ENCODE measurements at regions of chr1 and their contacts with region 1.

Region 1: DNA sequence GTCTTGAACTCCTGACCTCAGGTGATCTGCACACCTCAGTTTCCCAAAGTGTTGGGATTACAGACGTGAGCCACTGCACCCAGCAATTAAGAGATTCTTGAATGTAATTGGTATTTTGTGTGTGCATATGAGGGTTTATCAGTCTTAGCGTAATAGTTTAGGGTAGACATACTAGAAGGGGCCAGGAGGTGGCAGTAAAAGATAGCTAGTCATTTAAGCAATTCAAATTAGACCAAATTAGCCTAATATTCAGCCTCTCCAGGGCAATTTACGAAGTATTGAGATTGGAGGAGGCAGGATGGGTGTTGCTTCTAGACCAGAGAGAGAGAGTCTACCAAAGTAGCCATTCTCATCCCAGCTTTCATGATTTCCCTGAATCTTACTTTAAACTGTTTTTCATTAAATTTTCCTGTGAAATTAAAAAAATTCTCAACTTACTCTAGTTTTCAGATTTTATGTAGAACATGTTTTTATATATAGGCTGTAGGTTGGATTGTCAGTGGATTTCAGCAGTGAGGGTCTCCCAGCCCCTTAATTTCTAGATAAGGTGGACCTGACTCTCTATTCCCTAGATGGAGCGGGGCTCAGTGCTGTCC is 119.7 kb downstream of the HHAT start:
- DNase-seq: peak; percentile 28
- H3K4me3 Mint-ChIP-seq: no peak overlapping the region
- H3K27ac Mint-ChIP-seq: no peak overlapping the region
- H3K4me1 Mint-ChIP-seq: peaks cover 18% of the 10 kb centered on the region
- H3K27me3 Mint-ChIP-seq: peaks cover 9% of the 10 kb centered on the region

Region 2: GRCh38 chr1:210373885-210374599 is 74.4 kb before region 1 on chr1:
- CTCF ChIA-PET with region 1: interaction called, 11 read pairs
- DNase-seq: peak; percentile 73
- H3K4me3 Mint-ChIP-seq: no peak overlapping the region
- H3K27ac Mint-ChIP-seq: peak overlapping the region; percentile 50
- H3K4me1 Mint-ChIP-seq: peaks cover 9% of the 10 kb centered on the region
- H3K27me3 Mint-ChIP-seq: no peaks in the 10 kb centered on the region

Region 3: DNA sequence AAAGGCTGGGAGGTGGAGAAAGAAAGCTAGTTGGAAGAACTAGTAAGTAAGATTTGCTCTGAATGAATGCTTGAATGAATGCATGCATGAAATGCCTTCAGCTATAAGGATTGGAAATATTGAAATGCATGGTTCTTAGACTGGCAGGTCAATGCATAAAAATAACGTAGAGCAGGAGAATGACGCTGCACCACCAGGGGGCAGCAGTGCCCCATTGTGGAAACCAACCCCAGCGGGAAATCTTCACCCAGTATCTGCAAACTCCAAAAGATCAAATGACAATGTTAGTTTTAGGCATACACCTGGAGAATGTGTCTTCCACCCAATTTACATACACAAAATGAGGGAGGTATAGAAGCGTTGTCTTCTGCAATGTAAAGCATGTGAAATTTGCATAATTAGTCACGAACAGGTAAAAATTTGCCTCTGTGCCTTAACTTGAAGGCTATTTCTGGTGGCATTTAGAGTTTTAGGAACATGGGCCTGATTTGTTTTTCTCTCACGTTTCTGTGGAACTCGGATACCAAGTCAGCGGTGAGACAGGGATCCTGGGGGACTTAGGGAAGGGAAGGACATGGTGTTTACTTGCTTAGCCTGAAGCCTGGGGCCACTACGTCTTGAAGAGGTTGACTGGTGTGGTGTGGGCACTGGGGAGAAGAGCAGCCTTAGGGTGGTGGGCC is 41.0 kb before region 1 on chr1:
- CTCF ChIA-PET with region 1: interaction called, 19 read pairs
- DNase-seq: peak; percentile 80
- H3K4me3 Mint-ChIP-seq: no peak overlapping the region
- H3K27ac Mint-ChIP-seq: no peak overlapping the region
- H3K4me1 Mint-ChIP-seq: no peaks in the 10 kb centered on the region
- H3K27me3 Mint-ChIP-seq: no peaks in the 10 kb centered on the region

Region 4: GRCh38 chr1:210618369-210618768 is 170.0 kb after region 1 on chr1:
- CTCF ChIA-PET with region 1: no interaction called
- DNase-seq: no peak
- H3K4me3 Mint-ChIP-seq: no peak overlapping the region
- H3K27ac Mint-ChIP-seq: no peak overlapping the region
- H3K4me1 Mint-ChIP-seq: no peaks in the 10 kb centered on the region
- H3K27me3 Mint-ChIP-seq: no peaks in the 10 kb centered on the region

Region 5: DNA sequence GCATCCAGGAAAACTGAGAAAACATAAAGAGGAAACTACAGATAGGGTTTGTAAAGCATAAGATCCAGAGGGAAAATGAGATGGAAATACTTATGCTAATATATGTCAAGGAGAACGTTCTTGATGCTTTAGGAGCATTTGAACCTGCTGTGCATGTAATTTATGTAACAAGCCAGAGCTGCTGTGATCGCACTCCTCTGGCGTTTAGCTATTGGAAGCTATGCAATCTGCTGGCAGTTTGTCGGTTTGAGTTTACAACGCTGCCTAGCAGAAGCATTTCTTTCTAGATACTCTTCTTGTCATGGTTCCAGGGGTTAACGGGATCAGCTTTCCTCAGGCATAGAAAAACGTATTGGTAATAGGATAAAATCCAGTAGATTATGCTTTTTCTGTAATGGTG is 502.9 kb after region 1 on chr1:
- CTCF ChIA-PET with region 1: interaction called, 11 read pairs
- DNase-seq: no peak
- H3K4me3 Mint-ChIP-seq: no peak overlapping the region
- H3K27ac Mint-ChIP-seq: no peak overlapping the region
- H3K4me1 Mint-ChIP-seq: no peaks in the 10 kb centered on the region
- H3K27me3 Mint-ChIP-seq: peaks cover 5% of the 10 kb centered on the region

Region 6: DNA sequence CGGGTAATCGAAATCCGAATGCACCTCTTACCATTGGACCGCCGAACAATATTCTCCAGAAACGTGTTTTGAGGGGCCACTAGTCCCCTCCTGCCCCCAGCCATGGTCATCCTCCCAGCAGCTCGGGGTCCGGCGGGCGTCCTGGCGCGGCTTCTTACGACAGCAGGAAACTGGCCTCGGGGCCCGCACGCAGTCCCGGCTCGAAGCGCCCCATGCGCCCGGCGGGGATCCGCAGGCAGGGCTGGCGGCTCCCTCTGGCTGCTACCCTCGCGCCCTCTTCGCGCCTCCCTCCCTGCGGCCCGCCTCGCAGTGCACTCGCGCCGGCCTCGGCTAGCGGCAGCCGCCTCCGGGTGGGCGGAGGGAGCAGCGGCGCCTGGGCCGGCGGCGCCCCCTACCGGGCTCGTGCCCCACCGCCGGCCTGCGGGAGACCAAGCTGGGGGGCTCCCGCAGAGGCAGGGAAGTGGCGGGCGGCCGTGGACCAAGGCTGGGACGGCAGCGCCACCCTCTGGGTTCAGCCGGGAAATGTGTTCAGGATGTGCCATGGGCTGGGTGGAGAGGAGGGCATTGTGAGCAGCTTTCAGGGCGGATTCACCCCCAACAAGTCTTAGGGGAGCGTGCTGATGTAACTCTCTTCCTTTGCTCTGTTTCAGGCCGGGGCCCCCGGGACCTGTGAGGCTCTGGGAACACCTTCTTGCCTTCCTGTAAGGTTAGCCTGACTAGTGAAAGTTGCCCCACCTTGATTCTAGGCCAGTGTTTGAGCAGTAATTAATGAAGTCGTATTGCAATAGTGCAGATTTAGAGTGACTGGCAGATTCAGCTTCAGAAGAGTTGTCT is 685.7 kb after region 1 on chr1 and contains the start of gene KCNH1:
- CTCF ChIA-PET with region 1: interaction called, 43 read pairs
- DNase-seq: peak; percentile 79
- H3K4me3 Mint-ChIP-seq: peak within 1 kb of the TSS; percentile 54
- H3K27ac Mint-ChIP-seq: no peak within 1 kb of the TSS
- H3K4me1 Mint-ChIP-seq: peaks cover 8% of the 10 kb centered on the region
- H3K27me3 Mint-ChIP-seq: peaks cover 41% of the 10 kb centered on the region